Cardiac septum (tissue), 1 donor: ENCODE measurements at regions of chr10 and their contacts with region 1.

Region 1: DNA sequence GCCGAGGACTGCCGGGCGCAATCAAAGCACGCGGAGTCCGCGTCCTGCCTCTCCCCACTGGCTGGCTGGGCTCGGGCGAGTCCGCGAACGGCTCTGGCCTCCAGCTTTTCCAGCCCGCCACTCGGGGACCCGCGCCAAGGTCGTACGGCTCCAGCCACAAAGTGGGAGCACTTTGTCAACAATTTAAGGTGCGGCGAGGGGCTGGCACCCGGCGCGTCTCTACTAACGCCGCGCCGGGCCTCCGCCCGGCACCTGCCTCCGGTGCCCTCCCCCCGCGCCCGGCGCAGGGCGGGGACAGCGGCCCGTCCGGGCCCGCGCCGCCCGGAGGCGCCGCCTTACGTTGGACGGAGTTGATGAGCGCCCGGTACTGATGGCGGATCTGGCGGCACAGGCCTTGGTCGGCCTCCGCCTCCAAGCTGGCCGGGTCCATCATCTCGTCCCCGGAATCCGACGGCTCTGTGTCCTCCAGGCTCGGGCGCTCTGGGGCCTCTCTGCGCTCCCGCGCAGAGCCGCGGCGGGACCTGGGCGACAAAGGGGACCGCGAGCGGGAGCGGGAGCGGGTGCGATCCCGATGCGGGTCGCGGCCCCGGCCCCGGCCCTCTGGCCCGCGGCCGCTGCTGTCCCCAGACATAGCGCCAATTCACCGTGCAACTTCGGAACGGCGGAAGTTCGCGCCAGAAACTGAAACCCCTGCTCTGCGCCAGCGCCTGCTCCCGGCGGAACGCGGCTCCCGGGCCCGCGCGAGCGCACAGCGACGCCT is at the start of gene NSMCE4A:
- DNase-seq: peak; percentile 91
- total RNA-seq, gene NSMCE4A: 29.0 TPM

Region 2: GRCh38 chr10:122044713-122045112 is 70.0 kb after region 1 on chr10:
- intact Hi-C with region 1: loop called (anchors 5 kb)
- DNase-seq: no peak

Region 3: DNA sequence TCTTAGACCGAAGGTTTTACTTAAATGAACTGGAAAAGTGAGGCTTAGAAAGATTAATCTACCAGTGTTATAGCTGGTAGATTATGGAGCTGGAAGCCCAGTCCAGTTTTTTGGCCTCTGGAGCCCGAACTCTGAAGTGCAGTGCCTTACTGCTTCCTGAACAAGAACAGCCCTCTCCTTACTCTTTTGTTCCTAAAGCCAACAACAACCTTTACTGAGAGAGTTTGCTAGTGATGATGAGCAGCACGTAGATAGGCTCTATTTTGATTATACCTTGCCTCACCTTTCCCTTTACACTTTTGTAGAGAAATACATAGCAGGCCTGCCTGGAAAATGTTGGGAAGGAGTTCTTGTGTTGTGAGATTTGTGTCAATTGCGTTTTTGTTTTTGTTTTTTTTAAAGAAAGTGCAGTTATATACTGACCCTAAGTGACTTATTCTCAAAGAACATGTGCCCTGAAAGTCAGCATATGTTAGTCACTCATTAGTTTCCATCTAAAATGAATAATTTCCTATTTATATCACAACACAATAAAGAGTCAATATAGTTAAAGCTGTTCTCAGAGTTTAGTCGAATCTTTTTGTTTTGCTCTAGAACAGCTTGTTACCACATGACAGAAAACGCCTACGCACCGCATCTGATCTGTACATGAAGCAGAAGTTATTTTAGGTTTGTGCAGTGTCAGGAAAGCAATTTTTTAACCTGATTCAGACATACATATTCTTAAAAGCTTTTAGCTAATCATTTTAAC is 432.8 kb after region 1 on chr10:
- intact Hi-C with region 1: no loop called
- DNase-seq: no peak